GM10248 (cell line): ENCODE measurements at regions of chr2 and their contacts with region 1.

Region 1: DNA sequence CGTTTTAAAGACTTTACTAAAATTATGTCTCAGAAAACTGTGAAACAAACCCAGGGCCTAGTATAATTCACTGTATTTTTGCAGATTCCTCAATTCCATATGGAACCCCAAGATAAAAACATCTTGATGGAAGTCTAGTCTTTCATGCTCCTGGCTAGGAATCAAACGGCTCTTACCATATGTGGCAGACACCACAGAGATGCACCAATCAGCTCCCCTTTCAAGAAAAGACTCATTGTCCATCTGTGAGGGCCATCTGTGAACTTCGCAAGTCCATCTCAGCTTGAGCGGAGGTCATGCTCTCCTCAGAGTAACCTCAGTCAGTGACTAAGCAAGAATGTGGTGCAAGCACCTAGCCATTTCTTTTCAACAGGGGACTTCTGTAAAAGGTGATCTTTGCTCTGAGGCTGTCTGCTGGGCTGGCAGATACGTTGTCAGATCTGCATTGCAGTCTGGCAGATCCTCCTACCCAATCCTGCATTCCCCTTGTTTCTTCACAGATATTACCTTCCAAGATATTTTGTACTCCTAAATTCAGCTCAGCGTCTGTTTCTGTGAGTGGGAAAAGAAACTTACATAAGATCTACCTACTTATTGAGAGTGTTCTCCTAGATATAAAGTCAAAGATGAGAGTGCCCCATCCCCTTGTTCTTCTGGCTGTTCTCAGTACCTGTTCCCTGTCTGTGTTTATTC is 419.3 kb downstream of the SPAG16 start:
- DNase-seq: no peak
- CTCF ChIP-seq: no peak

Region 2: DNA sequence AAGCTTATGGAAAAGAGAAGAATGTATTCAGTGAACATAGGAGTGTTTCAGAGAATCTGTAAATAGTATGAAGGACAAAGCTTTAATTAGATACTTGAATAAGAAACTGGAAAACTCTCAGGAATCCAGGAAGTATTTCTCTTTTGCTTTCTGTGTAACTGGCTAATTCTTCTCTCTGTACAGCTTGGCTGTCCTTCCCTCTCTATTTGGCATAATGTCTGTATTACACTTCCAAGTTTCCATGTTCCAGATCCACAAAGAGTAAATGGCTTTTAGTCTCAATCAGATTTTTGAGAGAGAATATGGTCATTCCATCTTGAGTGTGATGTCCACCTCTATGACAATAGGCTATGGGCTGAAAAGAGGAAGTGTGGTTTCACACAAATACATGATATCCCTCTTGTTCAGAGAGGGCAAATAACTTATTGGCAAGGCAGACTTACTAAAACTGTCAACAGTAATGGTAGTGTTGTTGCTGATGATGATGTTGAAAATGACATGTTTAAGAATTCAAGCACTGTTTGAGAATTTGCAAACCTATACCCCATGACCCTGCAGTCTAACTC is 1035.7 kb before region 1 on chr2:
- CTCF ChIA-PET with region 1: no interaction called
- POLR2A ChIA-PET with region 1: no interaction called
- DNase-seq: no peak
- CTCF ChIP-seq: no peak

Region 3: DNA sequence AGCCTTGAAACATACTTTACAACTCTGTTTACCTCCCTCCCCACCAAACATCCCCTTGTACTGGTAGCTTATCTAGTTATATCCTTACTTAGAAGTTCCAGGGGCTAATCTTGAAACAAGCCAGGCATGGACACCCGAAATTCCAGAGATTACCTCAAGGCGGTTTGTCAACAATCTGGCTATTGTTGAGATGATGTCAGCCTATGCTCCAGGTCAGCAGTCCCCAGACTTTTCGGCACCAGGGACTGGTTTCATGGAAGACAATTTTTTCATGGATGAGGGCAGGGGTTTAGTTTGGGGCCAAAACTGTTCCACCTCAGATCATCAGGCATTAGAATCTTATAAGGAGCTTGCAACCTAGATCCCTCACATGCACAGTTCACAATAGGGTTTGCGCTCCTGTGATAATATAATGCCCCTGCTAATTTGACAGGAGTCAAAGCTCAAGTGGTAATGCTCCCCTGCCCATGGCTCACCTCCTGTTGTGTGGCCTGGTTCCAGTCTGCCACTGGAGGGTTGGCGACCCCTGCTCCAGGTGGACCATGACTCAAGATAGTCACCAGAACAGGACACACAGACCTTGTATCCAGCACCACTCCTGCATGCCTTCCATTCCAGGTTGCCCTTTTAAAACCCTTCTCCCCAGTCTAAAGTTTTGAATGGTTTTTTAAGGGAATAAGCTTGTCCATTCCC is 248.1 kb before region 1 on chr2:
- CTCF ChIA-PET with region 1: no interaction called
- POLR2A ChIA-PET with region 1: no interaction called
- DNase-seq: no peak
- CTCF ChIP-seq: no peak

Region 4: DNA sequence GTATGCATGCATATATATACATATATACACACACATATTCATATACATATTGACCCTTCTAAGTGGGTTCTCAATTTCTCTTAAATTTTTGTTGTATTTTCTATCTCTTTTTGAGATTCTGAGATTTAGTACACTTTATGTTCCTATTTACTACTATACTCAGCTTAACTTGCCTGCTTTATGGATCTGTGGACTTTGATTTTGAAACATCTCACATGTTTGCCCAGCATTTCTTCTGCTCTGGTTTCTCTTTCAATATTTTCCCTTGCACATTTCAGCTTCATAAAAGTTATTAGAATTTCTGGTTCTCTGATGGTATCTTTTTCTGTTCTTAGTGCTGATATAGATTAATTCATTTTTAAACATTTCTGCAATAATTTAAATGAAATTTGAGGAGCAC is 38.7 kb before region 1 on chr2:
- CTCF ChIA-PET with region 1: no interaction called
- POLR2A ChIA-PET with region 1: no interaction called
- DNase-seq: no peak
- CTCF ChIP-seq: no peak

Region 5: DNA sequence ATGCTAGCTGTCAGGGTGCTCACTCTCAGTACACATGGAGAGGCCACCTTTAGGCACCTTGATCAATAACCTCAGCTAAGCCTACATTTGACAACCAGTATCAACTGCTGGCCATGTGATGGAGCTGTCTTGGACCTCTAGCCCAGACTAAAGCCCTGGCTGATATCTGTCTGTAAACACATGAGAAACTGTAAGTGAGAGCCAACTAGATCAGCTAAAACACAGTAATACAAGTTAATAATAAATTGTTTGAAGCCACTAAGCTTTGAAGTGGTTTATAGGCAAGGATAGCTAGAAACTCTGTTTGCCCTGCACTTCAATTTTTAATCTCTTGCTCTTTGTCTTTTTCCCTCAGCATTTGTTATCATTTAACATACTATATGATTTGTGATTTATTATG is 12.2 kb before region 1 on chr2:
- CTCF ChIA-PET with region 1: interaction called, 11 read pairs
- POLR2A ChIA-PET with region 1: no interaction called
- DNase-seq: no peak
- CTCF ChIP-seq: no peak

Region 6: GRCh38 chr2:213848631-213849030 is 145.1 kb after region 1 on chr2:
- CTCF ChIA-PET with region 1: no interaction called
- POLR2A ChIA-PET with region 1: no interaction called
- DNase-seq: no peak
- CTCF ChIP-seq: no peak